ENCODE measurements at regions of chr20 and their contacts with region 1.

Region 1: GRCh38 chr20:5548902-5549599 is 201.2 kb upstream of the SHLD1 start:
- DNase-seq: no peak
- ATAC-seq: no peak
- H3K4me3 Mint-ChIP-seq: no peak overlapping the region
- H3K27ac Mint-ChIP-seq: no peak overlapping the region
- H3K4me1 Mint-ChIP-seq: no peaks in the 10 kb centered on the region
- H3K27me3 Mint-ChIP-seq: no peaks in the 10 kb centered on the region
- CTCF ChIP-seq: no peak

Region 2: DNA sequence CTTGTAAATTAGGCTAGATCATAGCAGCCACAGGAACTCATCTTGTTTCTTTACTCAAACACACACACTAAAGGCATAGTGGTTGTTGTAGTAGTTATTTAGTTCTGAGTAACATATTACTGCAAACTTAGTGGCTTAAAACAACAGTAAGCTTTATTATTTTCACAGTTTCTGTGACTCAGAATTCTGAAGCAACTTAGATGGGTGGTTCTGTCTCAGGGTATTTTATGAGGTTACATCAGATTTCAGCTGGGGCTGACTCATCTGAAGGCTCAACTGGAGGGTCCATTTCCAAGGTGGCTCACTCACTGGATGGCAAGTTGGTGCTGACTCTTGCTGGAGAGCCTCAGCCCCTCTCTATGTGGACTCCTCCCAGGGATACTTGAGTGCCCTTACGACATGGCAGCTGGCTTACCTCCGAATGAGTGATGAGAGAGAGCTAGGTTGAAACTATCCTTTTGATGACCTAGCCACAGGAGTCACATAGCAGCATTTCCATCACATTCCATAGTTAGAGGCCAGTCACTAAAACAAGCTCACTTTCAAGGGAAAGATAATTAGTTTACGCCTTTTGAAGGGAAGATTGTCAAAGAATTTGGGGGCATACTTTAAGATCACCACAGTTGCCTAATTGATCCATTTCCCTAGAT is 963.8 kb before region 1 on chr20:
- CTCF ChIA-PET with region 1: no interaction called
- POLR2A ChIA-PET with region 1: no interaction called
- intact Hi-C with region 1: no loop called
- DNase-seq: no peak
- ATAC-seq: no peak
- H3K4me3 Mint-ChIP-seq: no peak overlapping the region
- H3K27ac Mint-ChIP-seq: no peak overlapping the region
- H3K4me1 Mint-ChIP-seq: no peaks in the 10 kb centered on the region
- H3K27me3 Mint-ChIP-seq: peaks cover 27% of the 10 kb centered on the region
- CTCF ChIP-seq: no peak

Region 3: DNA sequence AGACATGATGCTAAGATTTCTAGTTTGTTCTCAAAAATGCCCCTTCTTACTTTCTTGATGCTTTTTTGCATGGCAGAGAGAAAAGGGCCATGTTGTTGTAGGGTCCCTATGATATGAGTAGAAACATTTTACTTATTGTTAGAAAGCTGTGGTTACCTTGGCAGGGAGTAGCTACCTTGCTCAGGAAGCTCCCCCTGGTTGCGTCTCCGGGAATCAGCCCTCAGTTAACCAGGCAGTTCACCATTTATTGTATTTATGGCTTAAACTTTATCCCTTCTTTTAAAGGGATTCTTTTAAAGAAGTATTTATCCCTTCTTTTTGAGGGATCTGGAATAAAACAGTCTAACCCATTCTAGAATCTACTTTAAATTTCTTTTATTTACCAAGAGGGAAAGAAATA is 118.4 kb before region 1 on chr20:
- CTCF ChIA-PET with region 1: no interaction called
- POLR2A ChIA-PET with region 1: no interaction called
- intact Hi-C with region 1: no loop called
- DNase-seq: no peak
- ATAC-seq: no peak
- H3K4me3 Mint-ChIP-seq: no peak overlapping the region
- H3K27ac Mint-ChIP-seq: no peak overlapping the region
- H3K4me1 Mint-ChIP-seq: no peaks in the 10 kb centered on the region
- H3K27me3 Mint-ChIP-seq: peaks cover 11% of the 10 kb centered on the region
- CTCF ChIP-seq: no peak

Region 4: GRCh38 chr20:5442101-5442500 is 107.0 kb before region 1 on chr20:
- CTCF ChIA-PET with region 1: no interaction called
- POLR2A ChIA-PET with region 1: no interaction called
- intact Hi-C with region 1: no loop called
- DNase-seq: no peak
- ATAC-seq: no peak
- H3K4me3 Mint-ChIP-seq: no peak overlapping the region
- H3K27ac Mint-ChIP-seq: no peak overlapping the region
- H3K4me1 Mint-ChIP-seq: no peaks in the 10 kb centered on the region
- H3K27me3 Mint-ChIP-seq: peaks cover 40% of the 10 kb centered on the region
- CTCF ChIP-seq: no peak

Region 5: DNA sequence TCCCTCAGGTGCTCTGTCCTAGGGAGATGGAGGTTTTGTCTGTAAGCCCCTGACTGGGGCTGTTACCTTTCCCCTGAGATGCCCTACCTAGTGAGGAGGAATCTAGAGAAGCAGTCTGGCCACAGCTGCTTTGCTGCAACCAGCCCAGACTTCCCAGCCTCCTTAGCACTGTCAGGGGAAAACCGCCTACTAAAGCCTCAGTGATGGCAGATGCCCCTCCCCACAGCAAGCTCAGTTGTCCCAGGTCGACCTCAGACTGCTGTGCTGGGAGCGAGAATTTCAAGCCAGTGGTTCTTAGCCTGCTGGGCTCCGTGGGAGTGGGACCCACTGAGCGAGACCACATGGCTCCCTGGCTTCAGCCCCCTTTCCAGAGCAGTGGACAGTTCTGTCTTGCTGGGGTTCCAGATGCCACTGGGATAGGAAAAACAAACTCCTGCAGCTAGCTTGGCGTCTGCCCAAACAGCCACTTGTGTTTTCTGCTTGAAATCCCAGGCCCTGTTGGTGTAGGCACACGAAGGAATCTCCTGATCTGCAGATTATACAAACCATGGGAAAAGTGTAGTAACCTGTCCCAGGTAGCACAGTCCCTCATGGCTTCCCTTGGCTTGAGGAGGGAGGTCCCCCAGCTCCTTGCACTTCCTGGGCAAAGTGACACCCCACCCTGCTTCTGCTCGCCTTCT is 85.9 kb before region 1 on chr20:
- CTCF ChIA-PET with region 1: no interaction called
- POLR2A ChIA-PET with region 1: no interaction called
- intact Hi-C with region 1: no loop called
- DNase-seq: no peak
- ATAC-seq: no peak
- H3K4me3 Mint-ChIP-seq: no peak overlapping the region
- H3K27ac Mint-ChIP-seq: no peak overlapping the region
- H3K4me1 Mint-ChIP-seq: no peaks in the 10 kb centered on the region
- H3K27me3 Mint-ChIP-seq: peaks cover 36% of the 10 kb centered on the region
- CTCF ChIP-seq: no peak

Region 6: GRCh38 chr20:5535125-5535771 is 13.8 kb before region 1 on chr20:
- CTCF ChIA-PET with region 1: interaction called, 3 read pairs
- POLR2A ChIA-PET with region 1: interaction called, 12 read pairs
- intact Hi-C with region 1: no loop called
- DNase-seq: no peak
- ATAC-seq: no peak
- H3K4me3 Mint-ChIP-seq: no peak overlapping the region
- H3K27ac Mint-ChIP-seq: no peak overlapping the region
- H3K4me1 Mint-ChIP-seq: peaks cover 2% of the 10 kb centered on the region
- H3K27me3 Mint-ChIP-seq: no peaks in the 10 kb centered on the region
- CTCF ChIP-seq: no peak

Region 7: DNA sequence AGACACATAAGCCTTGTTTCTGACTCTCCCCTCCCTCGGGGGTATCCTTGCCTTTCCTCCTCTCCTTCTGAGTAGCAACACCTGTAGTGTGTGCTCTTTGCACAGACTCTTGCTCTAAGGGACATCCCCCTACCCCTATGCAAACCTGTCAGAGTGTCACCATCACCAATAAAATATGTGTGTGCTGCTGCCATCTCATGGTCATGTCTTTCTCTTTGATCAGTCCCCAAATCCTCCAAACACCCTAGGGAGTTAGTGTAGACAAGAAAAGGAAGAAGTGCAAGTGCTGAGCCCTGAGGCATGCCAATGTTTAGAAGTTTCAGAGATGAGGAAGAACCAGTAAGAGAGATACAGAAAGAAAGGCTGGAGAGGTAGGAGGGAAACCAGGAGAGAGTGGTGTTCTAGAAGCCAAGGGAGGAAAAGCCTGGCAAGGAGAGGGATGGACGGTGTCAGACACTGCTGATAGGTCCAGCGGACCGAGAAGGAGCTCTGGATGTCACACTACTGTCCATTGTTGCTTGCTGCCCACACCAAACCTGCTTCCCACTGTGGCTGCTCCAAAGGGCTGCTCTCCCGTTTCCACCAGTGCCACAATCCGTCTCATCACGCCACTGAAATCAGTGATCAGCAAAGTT is 384.9 kb after region 1 on chr20:
- CTCF ChIA-PET with region 1: no interaction called
- POLR2A ChIA-PET with region 1: no interaction called
- intact Hi-C with region 1: loop called (anchors 5 kb)
- DNase-seq: no peak
- ATAC-seq: peak; percentile 83
- H3K4me3 Mint-ChIP-seq: no peak overlapping the region
- H3K27ac Mint-ChIP-seq: no peak overlapping the region
- H3K4me1 Mint-ChIP-seq: peaks cover 6% of the 10 kb centered on the region
- H3K27me3 Mint-ChIP-seq: peaks cover 7% of the 10 kb centered on the region
- CTCF ChIP-seq: no peak

Measured in activated B cell treated with CpG ODN at 0.5 μM for 24 hours (primary cell).